Endothelial cell of umbilical vein (primary cell): ENCODE measurements at regions of chr3 and their contacts with region 1.

Region 1: DNA sequence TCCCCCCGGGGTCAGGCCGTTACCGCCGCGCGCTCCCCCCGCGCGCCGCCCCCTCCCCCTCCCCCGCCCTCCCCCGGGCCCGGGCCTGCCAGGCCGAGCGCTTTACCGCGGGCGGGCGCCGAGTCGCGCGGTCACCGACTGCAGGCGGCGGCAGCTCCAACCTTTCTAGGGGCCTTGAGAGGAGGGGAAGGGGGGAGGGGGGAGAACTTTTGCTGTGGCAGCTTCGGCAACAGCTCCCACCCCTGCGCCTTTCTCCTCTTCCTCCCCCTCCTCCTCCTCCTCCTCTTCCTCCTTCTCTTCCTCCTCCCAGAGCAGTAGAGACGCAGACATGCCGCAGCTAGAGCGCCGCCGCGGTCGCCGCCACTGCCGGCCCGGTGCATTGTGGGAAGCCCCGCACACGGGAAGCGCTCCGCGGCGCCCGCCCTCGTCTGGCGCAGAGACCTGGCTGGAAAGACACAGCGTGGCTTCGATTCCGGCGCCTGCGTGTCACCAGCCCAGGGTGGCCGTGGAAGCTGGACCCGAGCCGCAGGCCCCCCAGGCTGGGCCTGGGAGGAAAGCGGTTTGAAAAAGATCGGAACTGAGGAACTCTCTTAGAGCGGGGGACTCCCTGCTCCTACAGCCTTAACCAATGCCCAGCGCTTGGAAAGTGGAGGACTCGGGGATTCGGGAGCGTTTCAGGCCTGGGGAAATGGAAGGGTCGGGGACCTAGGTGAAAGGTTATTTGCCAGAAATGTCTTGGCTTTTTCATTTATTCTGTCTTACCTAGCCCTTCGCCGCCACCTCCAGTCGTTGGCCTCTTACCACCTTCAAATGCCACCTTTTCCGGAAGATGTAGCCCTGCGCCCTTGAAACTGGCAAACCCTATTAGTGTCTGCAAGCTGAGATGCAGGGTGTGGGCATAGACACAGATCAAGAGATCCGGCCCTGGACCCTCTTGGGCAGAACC is at the start of gene ZNF148:
- DNase-seq: peak; percentile 92
- H3K4me3 ChIP-seq: peak within 1 kb of the TSS; percentile 90 to 100 (median 95)
- H3K27ac ChIP-seq: peak within 1 kb of the TSS; percentile 57
- H3K4me1 ChIP-seq: peaks cover 15% of the 10 kb centered on the region
- H3K27me3 ChIP-seq: no peaks in the 10 kb centered on the region
- CTCF ChIP-seq: peak in 1 of 2 donors; percentile 3
- POLR2A ChIP-seq: peak; percentile 91
- total RNA-seq, gene ZNF148: 38.2 and 41.3 TPM in 2 replicates

Region 2: DNA sequence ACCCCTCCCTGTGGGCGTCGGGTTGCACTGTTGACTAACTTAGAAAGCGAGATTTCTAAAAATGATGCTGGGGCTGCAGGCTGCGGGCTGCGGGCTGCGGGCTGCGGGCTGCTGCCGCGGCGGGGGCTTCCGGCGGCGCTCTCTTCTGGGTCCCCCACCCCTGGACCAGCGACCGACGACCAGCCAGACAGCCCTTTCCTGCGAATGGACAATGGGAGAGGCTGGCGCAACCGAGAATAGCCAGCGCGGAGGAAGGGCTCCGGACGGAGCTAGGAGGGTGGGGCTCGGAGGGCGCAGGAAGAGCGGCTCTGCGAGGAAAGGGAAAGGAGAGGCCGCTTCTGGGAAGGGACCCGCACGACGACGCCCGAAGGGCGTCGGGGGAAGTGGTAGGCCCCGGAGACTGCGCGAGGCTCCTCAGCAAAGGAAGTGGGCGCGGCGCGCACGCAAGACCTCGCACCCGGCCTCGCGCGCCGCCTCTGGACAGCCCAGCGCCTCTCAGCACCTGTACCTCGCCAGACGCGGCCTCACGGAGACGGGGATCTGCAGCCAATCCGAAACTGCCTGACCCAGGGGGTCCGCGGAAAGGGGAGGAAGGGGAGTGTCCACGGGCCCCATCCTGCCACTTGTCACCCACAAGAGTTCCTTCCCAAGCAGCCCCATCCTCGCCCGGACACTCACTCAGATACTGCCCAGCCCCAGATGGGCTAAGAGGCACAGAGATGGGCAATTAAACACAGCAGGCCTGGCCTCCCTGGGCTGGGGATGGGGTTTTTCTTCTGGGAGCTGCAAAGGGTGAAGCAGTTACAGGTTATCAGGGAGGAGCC is 233.5 kb before region 1 on chr3:
- CTCF ChIA-PET with region 1: no interaction called
- POLR2A ChIA-PET with region 1: no interaction called
- dilution Hi-C with region 1: no loop called
- intact Hi-C with region 1: loop called (anchors 5 kb)
- DNase-seq: peak; percentile 37
- H3K4me3 ChIP-seq: peak overlapping the region in 2 of 3 experiments; percentile 10 to 35
- H3K27ac ChIP-seq: no peak overlapping the region
- H3K4me1 ChIP-seq: peaks cover 12% of the 10 kb centered on the region
- H3K27me3 ChIP-seq: no peaks in the 10 kb centered on the region
- CTCF ChIP-seq: peak in 1 of 2 donors; percentile 59
- POLR2A ChIP-seq: no peak

Region 3: DNA sequence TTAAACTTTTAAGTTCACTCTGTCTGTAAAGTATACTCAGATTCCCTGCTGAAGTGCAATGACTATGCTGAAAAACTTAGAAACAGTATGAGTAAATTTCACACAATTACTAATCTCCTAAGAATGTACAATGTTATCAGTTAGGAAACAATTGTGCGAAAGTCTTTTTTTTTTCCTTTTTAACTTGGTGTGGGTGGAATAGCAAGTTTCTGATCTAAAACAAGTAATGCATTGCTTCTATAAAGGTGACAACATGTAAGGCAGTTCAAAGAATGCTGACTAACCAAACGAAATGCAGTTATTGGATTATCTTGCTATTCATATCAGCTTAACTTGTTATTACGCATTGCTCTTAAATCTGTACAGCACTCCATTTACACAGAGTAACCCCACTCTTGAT is 143.4 kb before region 1 on chr3:
- CTCF ChIA-PET with region 1: no interaction called
- POLR2A ChIA-PET with region 1: no interaction called
- dilution Hi-C with region 1: no loop called
- intact Hi-C with region 1: loop called (anchors 5 kb)
- DNase-seq: peak; percentile 84
- H3K4me3 ChIP-seq: no peak overlapping the region
- H3K27ac ChIP-seq: peak overlapping the region; percentile 74
- H3K4me1 ChIP-seq: peaks cover 19% of the 10 kb centered on the region
- H3K27me3 ChIP-seq: no peaks in the 10 kb centered on the region
- CTCF ChIP-seq: no peak
- POLR2A ChIP-seq: no peak

Region 4: GRCh38 chr3:125266971-125267370 is 108.3 kb before region 1 on chr3:
- CTCF ChIA-PET with region 1: no interaction called
- POLR2A ChIA-PET with region 1: no interaction called
- dilution Hi-C with region 1: no loop called
- intact Hi-C with region 1: loop called (anchors 5 kb)
- DNase-seq: no peak
- H3K4me3 ChIP-seq: no peak overlapping the region
- H3K27ac ChIP-seq: no peak overlapping the region
- H3K4me1 ChIP-seq: no peaks in the 10 kb centered on the region
- H3K27me3 ChIP-seq: no peaks in the 10 kb centered on the region
- CTCF ChIP-seq: no peak
- POLR2A ChIP-seq: no peak

Region 5: DNA sequence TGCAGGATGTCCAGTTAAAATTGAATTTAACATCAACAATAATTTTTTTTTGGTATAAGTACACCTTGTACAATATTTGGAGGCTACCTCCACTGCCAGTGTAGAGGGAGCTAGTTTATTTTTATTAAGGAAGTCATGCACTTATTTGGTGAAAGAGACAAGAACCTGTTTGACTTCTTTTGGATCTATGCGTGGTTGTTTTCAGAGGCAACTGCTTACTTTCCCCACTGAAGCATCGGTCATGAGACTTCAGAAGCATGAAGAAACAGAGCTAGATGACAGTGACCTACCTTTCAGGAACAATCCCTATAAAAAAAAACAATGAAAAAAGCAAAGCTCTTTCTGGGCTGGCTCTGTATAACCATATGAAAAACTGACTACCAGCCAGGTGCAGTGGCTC is 19.8 kb after region 1 on chr3:
- CTCF ChIA-PET with region 1: no interaction called
- POLR2A ChIA-PET with region 1: no interaction called
- dilution Hi-C with region 1: no loop called
- intact Hi-C with region 1: no loop called
- DNase-seq: no peak
- H3K4me3 ChIP-seq: no peak overlapping the region
- H3K27ac ChIP-seq: no peak overlapping the region
- H3K4me1 ChIP-seq: no peaks in the 10 kb centered on the region
- H3K27me3 ChIP-seq: peaks cover 11 to 19% of the 10 kb centered on the region in 2 experiments
- CTCF ChIP-seq: no peak
- POLR2A ChIP-seq: no peak

Region 6: DNA sequence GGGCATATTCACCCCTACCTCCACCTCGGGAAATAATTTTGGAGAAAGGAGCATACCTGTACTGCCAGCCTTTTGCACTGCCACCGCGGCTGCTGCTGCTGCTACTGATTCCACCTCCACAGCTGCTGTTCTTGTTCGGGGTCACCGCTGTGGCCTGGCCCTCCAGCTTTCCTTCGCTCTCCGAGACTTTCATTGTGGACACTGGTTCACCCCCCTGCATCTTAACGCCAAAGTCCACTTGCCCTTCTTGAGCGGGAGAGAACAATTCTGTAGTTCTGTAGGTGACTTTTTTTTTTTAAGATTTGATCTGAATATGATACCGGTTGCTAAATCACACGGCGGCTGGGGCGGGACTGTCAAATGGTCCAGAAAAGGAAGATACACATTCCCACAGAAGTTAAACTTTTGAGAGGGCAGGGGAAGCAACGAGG is 219.3 kb after region 1 on chr3:
- CTCF ChIA-PET with region 1: no interaction called
- POLR2A ChIA-PET with region 1: no interaction called
- dilution Hi-C with region 1: no loop called
- intact Hi-C with region 1: loop called (anchors 2 kb)
- DNase-seq: no peak
- H3K4me3 ChIP-seq: peak overlapping the region; percentile 51 to 89 (median 58)
- H3K27ac ChIP-seq: peak overlapping the region; percentile 32
- H3K4me1 ChIP-seq: peaks cover 22% of the 10 kb centered on the region
- H3K27me3 ChIP-seq: no peaks in the 10 kb centered on the region
- CTCF ChIP-seq: no peak
- POLR2A ChIP-seq: no peak